ENCODE measurements at regions of chr9 and their contacts with region 1.

Region 1: GRCh38 chr9:110188991-110189390 is 19.0 kb downstream of the C9orf152 start:
- DNase-seq: no peak
- ATAC-seq: peak; percentile 69

Region 2: GRCh38 chr9:110252509-110253139 is 63.6 kb after region 1 on chr9:
- intact Hi-C with region 1: no loop called
- DNase-seq: no peak
- ATAC-seq: no peak

Region 3: GRCh38 chr9:110623462-110624025 is 434.6 kb after region 1 on chr9:
- intact Hi-C with region 1: loop called (anchors 5 kb)
- DNase-seq: no peak
- ATAC-seq: no peak

Measured in Right ventricle myocardium inferior (tissue), 1 donor.